HEK293 (cell line): ENCODE measurements at regions of chr17 and their contacts with region 1.

Region 1: DNA sequence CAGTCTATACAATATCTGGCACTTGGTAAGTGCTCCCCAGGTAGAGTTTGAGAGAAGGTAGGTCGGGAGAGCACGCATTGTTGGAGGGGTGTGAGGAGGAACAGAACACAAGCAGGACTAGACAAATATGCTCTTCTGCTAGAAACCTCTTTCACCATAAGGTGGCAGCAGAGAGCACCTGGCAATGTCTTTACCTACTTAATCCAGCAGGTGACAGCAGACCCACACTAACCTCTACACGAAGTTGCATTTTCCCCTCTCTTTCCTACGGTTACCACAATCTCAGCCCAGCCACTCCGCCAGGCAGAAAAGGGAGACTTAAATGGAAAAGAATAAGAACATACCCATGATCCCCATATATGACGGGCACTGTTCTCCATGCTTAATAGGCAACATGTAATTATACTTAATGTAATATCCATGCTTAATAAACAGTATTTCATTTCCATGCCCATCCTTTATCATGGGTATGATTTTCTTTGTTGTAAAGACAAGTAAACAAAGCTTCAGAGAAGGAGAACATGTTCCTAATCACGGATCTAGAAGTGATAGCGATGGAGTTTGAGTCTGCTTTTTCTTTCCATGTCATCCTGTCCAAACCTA is 55.1 kb upstream of the CCL2 start:
- H3K4me3 ChIP-seq: no peak overlapping the region
- H3K27ac ChIP-seq: no peak overlapping the region
- H3K4me1 ChIP-seq: no peaks in the 10 kb centered on the region
- CTCF ChIP-seq: peak; percentile 99

Region 2: DNA sequence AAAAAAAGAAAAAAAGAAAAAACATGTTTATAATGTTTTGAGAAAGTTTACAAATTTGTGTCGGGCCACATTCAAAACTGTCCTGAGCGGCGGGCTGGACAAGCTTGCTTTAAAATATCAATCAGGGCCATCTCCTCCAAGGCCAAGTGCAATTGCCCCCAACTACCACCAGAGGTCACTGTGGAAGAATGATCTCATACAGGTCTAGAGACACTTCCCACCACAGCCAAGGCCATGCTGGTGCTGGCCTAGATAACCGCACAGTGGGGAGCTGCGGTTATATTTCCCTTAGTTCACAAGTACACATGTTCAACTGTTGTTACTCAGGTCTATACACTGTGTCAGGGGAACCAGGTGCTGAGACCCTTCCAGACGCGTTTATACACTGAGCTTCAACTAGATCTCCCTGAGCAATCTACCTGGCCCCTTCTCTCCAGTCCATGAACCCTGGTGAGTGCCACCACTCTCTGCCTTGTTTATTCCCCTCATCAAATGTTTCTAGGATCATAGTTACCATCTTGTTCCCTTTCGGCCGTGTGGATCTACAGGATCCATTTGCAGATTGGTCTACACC is 28.7 kb before region 1 on chr17:
- CTCF ChIA-PET with region 1: interaction called, 34 read pairs
- POLR2A ChIA-PET with region 1: no interaction called
- H3K4me3 ChIP-seq: no peak overlapping the region
- H3K27ac ChIP-seq: no peak overlapping the region
- H3K4me1 ChIP-seq: peaks cover 5% of the 10 kb centered on the region; the same call in 1 of the 2 replicates
- CTCF ChIP-seq: peak; percentile 41; the same call in 1 of the 2 replicates

Region 3: DNA sequence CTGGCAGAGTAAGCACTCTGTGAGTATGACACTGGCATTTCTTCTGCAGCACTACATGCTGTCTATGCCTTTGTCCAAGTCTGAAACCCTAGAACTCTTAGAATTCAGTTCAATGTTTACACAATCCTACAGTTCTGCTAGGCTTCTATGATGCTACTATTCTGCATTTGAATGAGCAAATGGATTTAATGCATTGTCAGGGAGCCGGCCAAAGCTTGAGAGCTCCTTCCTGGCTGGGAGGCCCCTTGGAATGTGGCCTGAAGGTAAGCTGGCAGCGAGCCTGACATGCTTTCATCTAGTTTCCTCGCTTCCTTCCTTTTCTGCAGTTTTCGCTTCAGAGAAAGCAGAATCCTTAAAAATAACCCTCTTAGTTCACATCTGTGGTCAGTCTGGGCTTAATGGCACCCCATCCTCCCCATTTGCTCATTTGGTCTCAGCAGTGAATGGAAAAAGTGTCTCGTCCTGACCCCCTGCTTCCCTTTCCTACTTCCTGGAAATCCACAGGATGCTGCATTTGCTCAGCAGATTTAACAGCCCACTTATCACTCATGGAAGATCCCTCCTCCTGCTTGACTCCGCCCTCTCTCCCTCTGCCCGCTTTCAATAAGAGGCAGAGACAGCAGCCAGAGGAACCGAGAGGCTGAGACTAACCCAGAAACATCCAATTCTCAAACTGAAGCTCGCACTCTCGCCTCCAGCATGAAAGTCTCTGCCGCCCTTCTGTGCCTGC is 54.8 kb after region 1 on chr17 and contains the start of gene CCL2:
- CTCF ChIA-PET with region 1: interaction called, 14 read pairs
- POLR2A ChIA-PET with region 1: no interaction called
- H3K4me3 ChIP-seq: peak within 1 kb of the TSS; percentile 49
- H3K27ac ChIP-seq: peak within 1 kb of the TSS; percentile 8; the same call in 1 of the 2 replicates
- H3K4me1 ChIP-seq: peaks cover 12% of the 10 kb centered on the region
- CTCF ChIP-seq: no peak

Region 4: DNA sequence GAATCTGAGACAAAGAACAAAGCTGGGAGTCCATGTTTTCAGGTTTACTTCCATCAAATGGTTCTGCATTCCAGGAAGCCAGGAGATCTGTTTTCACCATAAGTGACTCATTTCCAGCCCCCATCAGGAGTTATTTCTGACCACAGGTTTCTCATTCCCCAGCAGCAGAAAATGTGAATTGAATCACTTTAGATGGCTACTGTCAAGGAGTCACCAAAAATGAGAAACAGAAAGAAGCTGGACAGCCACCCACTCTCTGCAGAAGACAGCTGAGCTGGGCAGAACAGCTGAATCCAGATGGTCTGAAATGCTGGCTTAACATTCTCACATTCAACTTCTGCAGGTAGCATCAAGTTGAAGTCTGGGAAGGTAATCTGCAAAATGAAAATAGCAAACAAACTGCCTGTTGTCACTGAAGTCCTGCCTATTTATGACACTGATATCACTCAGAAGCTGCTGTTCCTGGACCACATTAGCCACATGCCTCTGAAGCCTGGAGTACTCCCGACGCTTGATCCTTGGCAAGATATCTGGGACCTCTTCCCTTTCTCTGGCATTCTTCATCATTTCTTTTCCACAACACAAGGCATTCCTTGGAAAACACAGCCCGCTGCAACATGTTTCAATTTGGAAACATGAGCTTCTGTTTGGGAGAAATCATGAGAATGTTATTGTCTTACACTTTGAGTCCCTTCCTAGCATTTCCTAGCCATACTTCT is 100.8 kb after region 1 on chr17:
- CTCF ChIA-PET with region 1: interaction called, 105 read pairs
- POLR2A ChIA-PET with region 1: no interaction called
- H3K4me3 ChIP-seq: no peak overlapping the region
- H3K27ac ChIP-seq: no peak overlapping the region
- H3K4me1 ChIP-seq: no peaks in the 10 kb centered on the region; the same call in 1 of the 2 replicates
- CTCF ChIP-seq: no peak

Region 5: DNA sequence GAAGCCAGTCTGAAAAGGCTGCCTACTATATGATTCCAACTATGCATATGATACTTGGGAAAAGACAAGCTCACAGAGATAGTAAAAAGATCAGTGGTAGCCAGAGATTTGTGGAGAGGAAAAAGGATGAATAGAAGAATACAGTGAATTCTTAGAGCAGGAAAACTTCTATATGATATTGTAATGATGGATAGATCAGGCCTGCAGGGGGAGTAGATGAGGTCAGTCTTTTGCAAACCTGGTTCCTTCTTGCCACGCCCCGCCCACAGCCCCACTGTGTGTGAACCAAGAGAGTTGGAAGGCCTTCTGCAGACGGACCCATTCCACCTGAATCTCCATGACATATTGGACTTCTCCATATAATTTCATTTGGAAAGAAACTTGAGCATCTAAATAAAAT is 118.4 kb after region 1 on chr17:
- CTCF ChIA-PET with region 1: interaction called, 17 read pairs
- POLR2A ChIA-PET with region 1: no interaction called
- H3K4me3 ChIP-seq: no peak overlapping the region
- H3K27ac ChIP-seq: no peak overlapping the region
- H3K4me1 ChIP-seq: no peaks in the 10 kb centered on the region
- CTCF ChIP-seq: no peak